ENCODE measurements at regions of chr17 and their contacts with region 1.

Region 1: DNA sequence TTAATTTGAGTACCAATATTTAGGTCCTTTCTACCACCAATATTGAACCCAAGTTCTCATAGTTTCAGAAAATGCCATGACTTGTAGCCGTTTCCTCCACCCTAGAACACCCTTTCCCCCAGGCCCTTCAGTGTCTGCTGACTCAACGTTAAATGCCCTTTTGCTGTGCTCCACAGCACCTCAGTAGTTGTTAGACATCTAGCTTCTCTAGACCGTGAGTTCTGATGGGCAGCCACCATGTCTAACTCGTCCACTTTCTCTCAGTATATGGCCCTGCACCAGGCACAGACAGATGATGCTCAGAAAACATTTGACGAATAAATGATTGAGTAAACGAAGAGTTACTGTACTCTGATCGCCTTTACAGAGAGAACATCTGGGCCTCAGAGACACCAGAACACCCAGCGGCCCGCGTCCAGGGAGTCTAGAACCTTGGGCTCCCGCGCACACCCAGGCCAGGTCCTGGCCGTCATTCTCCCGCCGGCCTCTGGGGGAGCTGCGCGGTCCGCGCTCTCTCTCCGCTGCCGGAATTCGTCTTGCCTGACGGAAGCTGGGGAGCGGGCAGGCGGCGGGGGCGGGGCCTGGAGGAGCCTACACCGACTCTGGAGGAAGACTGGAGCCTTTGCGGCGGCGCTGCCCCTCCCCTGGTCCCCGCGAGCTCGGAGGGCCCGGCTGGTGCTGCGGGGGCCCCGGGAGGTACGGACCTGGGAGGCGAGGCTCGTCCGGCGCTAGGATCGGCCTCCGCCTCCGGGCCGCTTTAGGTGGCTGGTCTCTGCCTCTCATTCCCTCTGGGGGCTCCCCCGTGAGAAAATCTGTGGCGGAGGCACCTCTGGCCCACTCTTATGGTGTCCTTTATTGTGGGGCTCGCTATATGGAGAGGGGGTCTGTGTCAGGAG is at the start of gene NKIRAS2:
- DNase-seq: peak; percentile 83 to 97 (median 89)
- ATAC-seq: peak; percentile 88
- H3K4me3 ChIP-seq: peak within 1 kb of the TSS; percentile 85
- H3K4me3 Mint-ChIP-seq: peak within 1 kb of the TSS; percentile 91 to 100 (median 99)
- H3K27ac ChIP-seq: peak within 1 kb of the TSS; percentile 84
- H3K27ac Mint-ChIP-seq: peak within 1 kb of the TSS; percentile 77 to 99 (median 90)
- H3K4me1 ChIP-seq: peaks cover 32 to 37% of the 10 kb centered on the region in 2 donors
- H3K4me1 Mint-ChIP-seq: peaks cover 44 to 69% (median 56%) of the 10 kb centered on the region in 7 donors
- H3K27me3 ChIP-seq: no peaks in the 10 kb centered on the region
- H3K27me3 Mint-ChIP-seq: no peaks in the 10 kb centered on the region
- total RNA-seq, gene NKIRAS2: 14.3 to 24.0 (median 20.4) TPM

Region 2: DNA sequence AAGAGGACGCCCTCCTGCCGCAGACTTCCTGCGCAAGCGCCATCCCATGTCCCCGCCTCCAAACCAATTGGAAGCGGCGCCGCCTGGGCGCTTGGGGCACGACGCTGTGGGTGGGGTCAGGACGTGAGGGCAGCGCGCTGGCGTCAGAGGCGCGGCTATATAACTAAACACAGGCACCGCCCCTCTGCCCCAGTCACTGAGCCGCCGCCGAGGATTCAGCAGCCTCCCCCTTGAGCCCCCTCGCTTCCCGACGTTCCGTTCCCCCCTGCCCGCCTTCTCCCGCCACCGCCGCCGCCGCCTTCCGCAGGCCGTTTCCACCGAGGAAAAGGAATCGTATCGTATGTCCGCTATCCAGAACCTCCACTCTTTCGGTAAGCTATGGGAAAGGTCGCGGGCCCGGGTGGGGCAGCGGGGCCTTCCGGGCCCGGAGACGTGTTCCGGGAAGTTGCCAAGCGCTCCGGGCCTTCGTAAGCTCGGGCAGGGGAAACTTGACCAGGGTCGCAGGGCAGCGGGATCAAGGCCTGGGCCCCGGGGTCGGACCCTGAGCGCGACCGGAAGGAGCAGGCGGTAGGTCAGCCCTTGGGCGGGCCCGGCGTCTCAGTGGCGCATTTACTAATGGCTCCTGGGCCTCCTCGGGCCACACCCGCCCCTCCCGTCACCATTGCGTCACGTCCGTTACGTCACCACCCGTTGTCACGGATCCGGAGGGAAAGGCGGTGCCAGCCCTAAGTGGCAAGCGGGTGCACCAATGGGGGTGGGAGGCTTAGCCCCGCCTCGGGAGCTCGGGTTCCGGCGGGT is 330.9 kb before region 1 on chr17 and contains the start of gene EIF1:
- CTCF ChIA-PET with region 1: no interaction called
- POLR2A ChIA-PET with region 1: interaction called, 10 read pairs
- intact Hi-C with region 1: no loop called
- DNase-seq: peak; percentile 98 to 100 (median 99)
- ATAC-seq: peak; percentile 85
- H3K4me3 ChIP-seq: peak within 1 kb of the TSS; percentile 86
- H3K4me3 Mint-ChIP-seq: peak within 1 kb of the TSS; percentile 90 to 99 (median 96)
- H3K27ac ChIP-seq: peak within 1 kb of the TSS; percentile 99
- H3K27ac Mint-ChIP-seq: peak within 1 kb of the TSS; percentile 98 to 99 (median 99)
- H3K4me1 ChIP-seq: peaks cover 22 to 25% of the 10 kb centered on the region in 2 donors
- H3K4me1 Mint-ChIP-seq: peaks cover 13 to 43% (median 35%) of the 10 kb centered on the region in 7 donors
- H3K27me3 ChIP-seq: no peaks in the 10 kb centered on the region
- H3K27me3 Mint-ChIP-seq: peaks cover 0 to 9% (median 0%) of the 10 kb centered on the region in 5 donors
- total RNA-seq, gene EIF1: 710 to 2,222 (median 934) TPM

Region 3: DNA sequence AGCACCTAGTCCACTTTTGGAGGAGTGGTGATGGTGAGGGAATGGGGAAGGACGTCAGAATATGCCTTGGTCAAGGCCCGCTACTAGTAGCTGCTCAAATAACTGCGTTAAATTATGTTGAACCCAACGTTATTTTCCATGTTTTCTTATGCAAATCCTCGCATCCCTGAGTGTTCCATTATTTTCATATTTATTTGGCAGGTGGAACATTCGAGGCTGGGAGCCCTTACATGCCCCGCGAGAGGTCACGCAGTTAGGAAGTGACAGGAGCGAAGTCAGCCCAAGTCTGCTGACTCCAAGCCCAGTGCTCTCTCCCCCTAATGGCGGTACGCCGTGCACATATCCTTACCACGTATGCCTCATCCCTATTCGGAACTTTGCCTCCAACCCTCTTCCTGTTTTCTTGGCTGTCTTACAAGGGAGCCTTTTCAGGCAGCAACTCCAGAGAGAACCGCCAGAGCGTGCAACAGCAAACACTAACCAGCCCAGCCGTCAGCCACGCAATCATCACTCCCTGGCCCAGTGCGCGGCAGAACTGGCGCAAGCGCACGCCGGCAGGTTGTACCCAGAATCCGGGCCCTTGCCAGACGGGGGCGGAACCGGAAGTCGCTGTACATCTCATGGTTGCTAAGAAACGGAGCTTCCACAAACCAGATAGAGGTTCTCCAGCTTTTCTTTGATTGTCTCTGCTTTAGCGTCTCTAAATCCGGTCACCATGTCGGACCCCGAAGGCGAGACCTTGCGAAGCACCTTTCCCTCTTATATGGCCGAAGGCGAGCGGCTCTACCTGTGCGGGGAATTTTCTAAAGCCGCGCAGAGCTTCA is 89.5 kb before region 1 on chr17 and contains the start of gene ODAD4:
- CTCF ChIA-PET with region 1: no interaction called
- POLR2A ChIA-PET with region 1: interaction called, 17 read pairs
- intact Hi-C with region 1: loop called in 1 of 2 experiments (anchors 1 kb)
- DNase-seq: peak; percentile 87 to 98 (median 97)
- ATAC-seq: peak; percentile 98
- H3K4me3 ChIP-seq: peak within 1 kb of the TSS; percentile 79
- H3K4me3 Mint-ChIP-seq: peak within 1 kb of the TSS; percentile 93 to 100 (median 96)
- H3K27ac ChIP-seq: peak within 1 kb of the TSS; percentile 84
- H3K27ac Mint-ChIP-seq: peak within 1 kb of the TSS; percentile 90 to 100 (median 96)
- H3K4me1 ChIP-seq: peaks cover 9 to 11% of the 10 kb centered on the region in 2 donors
- H3K4me1 Mint-ChIP-seq: peaks cover 18 to 52% (median 24%) of the 10 kb centered on the region in 7 donors
- H3K27me3 ChIP-seq: no peaks in the 10 kb centered on the region
- H3K27me3 Mint-ChIP-seq: no peaks in the 10 kb centered on the region
- total RNA-seq, gene ODAD4: 0.16 to 4.1 (median 1.6) TPM in 4 of 5 experiments, not detected in the other

Region 4: DNA sequence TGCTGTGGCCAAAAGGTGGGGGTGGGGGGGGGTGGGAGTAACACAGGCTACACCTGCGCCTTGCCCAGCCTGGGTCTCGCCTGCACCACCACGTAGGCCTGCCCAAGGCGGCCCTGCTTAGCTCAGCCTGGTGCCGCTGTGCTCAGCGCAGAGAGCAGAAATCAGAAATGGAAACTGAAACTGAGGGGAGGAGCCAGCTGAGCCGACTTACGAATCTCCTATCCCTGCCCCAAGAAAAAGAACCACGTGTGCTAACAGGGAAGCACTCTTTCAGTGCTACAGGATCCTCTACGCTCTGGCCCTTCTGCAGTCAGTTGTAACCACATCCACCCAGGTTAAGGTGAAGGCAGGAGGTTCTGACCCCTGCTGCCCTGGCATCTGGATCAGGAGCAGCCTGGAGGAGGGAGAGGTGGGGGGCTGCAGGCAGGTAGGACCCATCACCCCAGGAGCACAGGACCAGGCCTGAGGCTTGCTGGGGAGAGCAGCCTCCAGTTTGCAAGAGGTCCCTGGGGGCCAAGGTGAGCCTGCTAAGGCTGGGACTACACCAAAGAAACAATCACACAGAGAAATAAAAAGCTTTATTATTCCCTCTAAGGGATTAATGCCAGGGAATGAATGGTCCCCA is 92.9 kb after region 1 on chr17 and contains the start of gene DHX58:
- CTCF ChIA-PET with region 1: interaction called, 22 read pairs
- POLR2A ChIA-PET with region 1: interaction called, 40 read pairs
- intact Hi-C with region 1: loop called (anchors 1 kb)
- DNase-seq: peak; percentile 47 to 86 (median 81)
- ATAC-seq: peak; percentile 85
- H3K4me3 ChIP-seq: peak within 1 kb of the TSS; percentile 83
- H3K4me3 Mint-ChIP-seq: peak within 1 kb of the TSS; percentile 86 to 96 (median 94)
- H3K27ac ChIP-seq: peak within 1 kb of the TSS; percentile 83
- H3K27ac Mint-ChIP-seq: peak within 1 kb of the TSS; percentile 94 to 100 (median 97)
- H3K4me1 ChIP-seq: peaks cover 12 to 34% of the 10 kb centered on the region in 2 donors
- H3K4me1 Mint-ChIP-seq: peaks cover 22 to 60% (median 48%) of the 10 kb centered on the region in 7 donors
- H3K27me3 ChIP-seq: no peaks in the 10 kb centered on the region
- H3K27me3 Mint-ChIP-seq: no peaks in the 10 kb centered on the region
- total RNA-seq, gene DHX58: 36.0 to 80.5 (median 53.5) TPM

Region 5: DNA sequence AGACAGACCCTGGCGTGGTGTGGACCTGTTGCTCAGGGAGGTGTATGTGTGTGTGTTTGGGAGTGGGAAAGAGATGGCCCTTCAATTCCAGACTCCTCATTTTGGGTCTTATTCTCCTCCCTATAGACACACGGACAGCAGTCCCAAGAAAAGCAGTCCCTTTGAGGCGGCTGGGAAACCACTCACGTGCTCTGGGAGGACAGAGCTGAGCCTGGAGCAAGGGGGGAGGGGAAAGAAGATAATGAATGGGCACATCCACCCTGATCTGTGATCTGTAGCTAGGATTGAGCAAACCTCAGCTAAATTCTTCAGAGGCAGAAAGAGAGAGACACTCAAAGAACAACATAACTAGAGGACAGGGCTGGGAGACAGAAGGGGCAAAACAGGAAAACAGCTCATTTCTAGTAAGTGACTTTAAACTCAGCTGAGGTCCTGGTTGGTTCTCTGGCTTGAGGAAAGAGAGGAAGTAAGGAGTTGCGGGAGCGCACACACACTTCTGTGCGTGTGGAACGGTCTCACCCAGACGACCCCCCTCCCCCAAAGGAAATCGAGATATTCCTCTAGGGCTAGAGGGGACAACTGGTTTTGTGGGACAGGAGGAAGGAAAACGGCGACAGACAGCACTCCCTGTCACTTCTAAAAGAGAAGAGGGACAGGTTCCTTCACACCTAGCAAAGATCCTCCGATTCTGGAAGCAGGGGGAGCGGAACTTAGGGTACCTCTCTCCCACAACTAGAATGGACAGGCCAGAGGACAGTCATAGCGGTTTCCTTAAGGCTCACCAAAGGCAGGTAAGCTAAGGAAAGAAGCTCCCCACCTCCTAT is 134.4 kb after region 1 on chr17:
- CTCF ChIA-PET with region 1: interaction called, 5 read pairs
- POLR2A ChIA-PET with region 1: interaction called, 6 read pairs
- intact Hi-C with region 1: loop called (anchors 1 kb)
- DNase-seq: no peak
- ATAC-seq: no peak
- H3K4me3 ChIP-seq: peak overlapping the region; percentile 76
- H3K4me3 Mint-ChIP-seq: peak overlapping the region; percentile 81 to 97 (median 94)
- H3K27ac ChIP-seq: peak overlapping the region; percentile 94
- H3K27ac Mint-ChIP-seq: peak overlapping the region; percentile 79 to 96 (median 93)
- H3K4me1 ChIP-seq: peaks cover 10 to 16% of the 10 kb centered on the region in 2 donors
- H3K4me1 Mint-ChIP-seq: peaks cover 21 to 43% (median 37%) of the 10 kb centered on the region in 7 donors
- H3K27me3 ChIP-seq: no peaks in the 10 kb centered on the region
- H3K27me3 Mint-ChIP-seq: no peaks in the 10 kb centered on the region

Region 6: GRCh38 chr17:42312285-42313130 is 292.8 kb after region 1 on chr17:
- CTCF ChIA-PET with region 1: no interaction called
- POLR2A ChIA-PET with region 1: interaction called, 3 read pairs
- intact Hi-C with region 1: loop called in 1 of 2 experiments (anchors 10 kb)
- DNase-seq: peak; percentile 62 to 81 (median 74)
- ATAC-seq: peak; percentile 82
- H3K4me3 ChIP-seq: peak overlapping the region; percentile 24
- H3K4me3 Mint-ChIP-seq: peak overlapping the region; percentile 54 to 82 (median 72)
- H3K27ac ChIP-seq: peak overlapping the region; percentile 69
- H3K27ac Mint-ChIP-seq: peak overlapping the region; percentile 62 to 94 (median 85)
- H3K4me1 ChIP-seq: peaks cover 13 to 67% of the 10 kb centered on the region in 2 donors
- H3K4me1 Mint-ChIP-seq: peaks cover 49 to 94% (median 79%) of the 10 kb centered on the region in 7 donors
- H3K27me3 ChIP-seq: no peaks in the 10 kb centered on the region
- H3K27me3 Mint-ChIP-seq: no peaks in the 10 kb centered on the region

Region 7: DNA sequence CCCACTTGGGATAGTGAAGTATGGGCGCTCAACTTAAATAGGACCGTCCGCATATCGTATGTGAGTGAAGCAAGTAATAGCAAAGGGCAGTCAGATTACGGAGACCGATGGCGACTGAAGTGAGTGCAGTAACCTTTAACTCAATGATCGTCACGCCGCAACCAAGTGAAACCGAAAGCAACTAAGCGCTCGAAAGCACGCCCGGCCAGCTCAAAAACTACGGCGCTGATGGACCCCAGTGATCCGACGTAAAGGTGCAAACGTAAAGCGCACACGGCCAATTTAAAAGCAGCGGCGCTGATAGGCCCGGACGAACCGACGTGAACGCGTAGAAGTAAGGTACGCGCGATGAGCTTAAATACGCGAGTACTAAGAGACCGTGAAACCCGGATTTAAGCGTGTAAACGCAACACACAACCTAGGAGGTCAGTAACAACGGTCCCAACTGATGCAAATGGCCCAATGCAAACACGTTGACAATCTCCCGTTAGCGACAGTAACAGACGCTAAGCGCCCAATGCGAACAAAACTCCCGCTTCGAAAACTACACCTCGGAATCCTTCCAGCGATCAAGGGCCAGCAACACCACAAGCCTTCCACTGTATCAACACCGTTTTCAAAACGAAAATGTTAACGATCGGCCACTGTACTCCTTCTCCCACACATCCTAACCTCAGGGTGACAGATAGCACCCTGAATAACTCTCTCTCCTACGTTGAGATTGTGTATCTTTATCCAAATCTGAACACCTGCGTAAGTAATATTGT is 1341.2 kb after region 1 on chr17:
- CTCF ChIA-PET with region 1: no interaction called
- POLR2A ChIA-PET with region 1: interaction called, 3 read pairs
- intact Hi-C with region 1: loop called in 1 of 2 experiments (anchors 10 kb)
- DNase-seq: peak; percentile 69 to 97 (median 91)
- ATAC-seq: peak; percentile 88
- H3K4me3 ChIP-seq: peak overlapping the region; percentile 71
- H3K4me3 Mint-ChIP-seq: peak overlapping the region; percentile 87 to 99 (median 96)
- H3K27ac ChIP-seq: peak overlapping the region; percentile 95
- H3K27ac Mint-ChIP-seq: peak overlapping the region; percentile 98 to 100 (median 100)
- H3K4me1 ChIP-seq: peaks cover 13 to 14% of the 10 kb centered on the region in 2 donors
- H3K4me1 Mint-ChIP-seq: peaks cover 9 to 56% (median 38%) of the 10 kb centered on the region in 7 donors
- H3K27me3 ChIP-seq: no peaks in the 10 kb centered on the region
- H3K27me3 Mint-ChIP-seq: peaks cover 0 to 9% (median 0%) of the 10 kb centered on the region in 5 donors